ENCODE measurements at regions of chr5 and their contacts with region 1.

Region 1: GRCh38 chr5:179504600-179505396 is 45.6 kb upstream of the RUFY1 start:
- DNase-seq: no peak
- H3K4me3 ChIP-seq: no peak overlapping the region
- H3K4me3 Mint-ChIP-seq: no peak overlapping the region
- H3K27ac ChIP-seq: no peak overlapping the region
- H3K27ac Mint-ChIP-seq: peak overlapping the region in 1 of 7 donors; percentile 28
- H3K4me1 ChIP-seq: peaks cover 14 to 21% of the 10 kb centered on the region in 2 donors
- H3K4me1 Mint-ChIP-seq: peaks cover 21% of the 10 kb centered on the region
- H3K27me3 ChIP-seq: no peaks in the 10 kb centered on the region
- H3K27me3 Mint-ChIP-seq: peaks cover 0 to 4% (median 3%) of the 10 kb centered on the region in 3 donors
- CTCF ChIP-seq: no peak

Region 2: GRCh38 chr5:179410291-179411160 is 94.3 kb before region 1 on chr5:
- intact Hi-C with region 1: no loop called
- DNase-seq: peak in 1 of 3 donors; percentile 2
- H3K4me3 ChIP-seq: no peak overlapping the region
- H3K4me3 Mint-ChIP-seq: no peak overlapping the region
- H3K27ac ChIP-seq: no peak overlapping the region
- H3K27ac Mint-ChIP-seq: no peak overlapping the region
- H3K4me1 ChIP-seq: no peaks in the 10 kb centered on the region
- H3K4me1 Mint-ChIP-seq: no peaks in the 10 kb centered on the region
- H3K27me3 ChIP-seq: no peaks in the 10 kb centered on the region
- H3K27me3 Mint-ChIP-seq: peaks cover 4 to 5% (median 4%) of the 10 kb centered on the region in 3 donors
- CTCF ChIP-seq: no peak

Region 3: DNA sequence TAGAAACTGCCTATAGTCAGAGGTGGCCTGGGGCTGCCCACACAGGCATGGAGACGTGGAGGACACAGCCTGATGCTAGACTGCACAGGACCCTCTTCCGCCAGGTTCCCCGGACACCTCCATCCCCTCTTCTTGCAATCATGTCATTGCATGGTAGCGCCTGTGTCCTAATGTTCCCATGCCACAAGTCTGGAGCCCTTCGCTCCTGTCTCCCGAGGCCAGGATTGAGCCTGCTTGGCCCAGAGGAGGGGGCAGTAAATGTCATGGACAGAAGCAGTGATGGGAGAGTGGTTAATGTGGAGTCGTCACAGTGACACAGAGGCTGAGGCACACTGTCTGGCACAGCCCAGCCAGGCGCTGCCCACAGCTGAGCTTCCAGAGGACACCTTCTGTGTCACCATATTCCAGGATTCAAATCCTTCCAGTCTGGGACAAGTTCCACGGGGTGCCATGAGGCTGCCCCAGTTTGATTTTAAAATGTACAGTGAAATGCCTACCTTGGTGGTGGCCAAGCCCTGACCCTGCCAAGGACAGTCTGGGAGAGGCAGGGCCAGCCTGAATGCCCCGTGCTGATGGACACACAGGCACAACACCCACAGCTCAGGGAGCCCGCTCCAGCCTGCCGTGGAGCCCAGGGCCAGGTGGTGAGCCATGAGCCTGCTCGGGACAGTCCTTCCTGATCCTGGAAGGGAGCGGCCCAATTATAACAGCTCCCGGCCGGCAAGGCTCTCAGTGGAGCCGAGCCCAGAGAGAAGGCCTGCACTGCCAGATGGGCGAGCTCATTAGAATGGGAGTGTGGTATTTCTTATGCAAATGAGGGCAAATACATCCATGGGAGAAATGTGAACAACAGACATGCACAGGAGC is 53.6 kb before region 1 on chr5:
- intact Hi-C with region 1: loop called in 1 of 2 experiments (anchors 5 kb)
- DNase-seq: peak in 1 of 3 donors; percentile 1
- H3K4me3 ChIP-seq: no peak overlapping the region
- H3K4me3 Mint-ChIP-seq: no peak overlapping the region
- H3K27ac ChIP-seq: no peak overlapping the region
- H3K27ac Mint-ChIP-seq: peak overlapping the region in 1 of 7 donors; percentile 28
- H3K4me1 ChIP-seq: no peaks in the 10 kb centered on the region
- H3K4me1 Mint-ChIP-seq: no peaks in the 10 kb centered on the region
- H3K27me3 ChIP-seq: no peaks in the 10 kb centered on the region
- H3K27me3 Mint-ChIP-seq: peaks cover 4 to 8% (median 8%) of the 10 kb centered on the region in 3 donors
- CTCF ChIP-seq: no peak

Region 4: DNA sequence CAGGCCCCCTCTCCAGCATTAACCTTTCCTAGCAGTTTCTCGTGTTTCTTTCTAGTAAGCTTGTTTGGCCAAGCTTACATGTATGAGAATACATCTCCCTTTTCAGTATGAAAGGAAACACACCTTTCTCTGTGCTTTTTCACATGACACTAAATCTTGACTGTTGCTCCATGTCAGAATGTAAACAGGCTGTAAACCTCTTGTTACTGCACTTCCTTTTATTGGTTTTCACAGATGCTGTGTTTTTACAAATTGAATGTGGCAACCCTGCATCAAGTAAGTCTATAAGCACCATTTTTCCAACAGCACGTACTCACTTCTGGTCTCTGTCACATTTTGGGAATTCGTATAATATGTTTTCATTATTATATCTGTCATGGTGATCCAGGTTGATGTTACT is 191.8 kb after region 1 on chr5:
- intact Hi-C with region 1: no loop called
- DNase-seq: peak in 1 of 3 donors; percentile 23
- H3K4me3 ChIP-seq: no peak overlapping the region
- H3K4me3 Mint-ChIP-seq: no peak overlapping the region
- H3K27ac ChIP-seq: peak overlapping the region in 1 of 2 donors; percentile 99
- H3K27ac Mint-ChIP-seq: peak overlapping the region; percentile 9 to 100 (median 69)
- H3K4me1 ChIP-seq: peaks cover 46 to 64% of the 10 kb centered on the region in 2 donors
- H3K4me1 Mint-ChIP-seq: peaks cover 44% of the 10 kb centered on the region
- H3K27me3 ChIP-seq: no peaks in the 10 kb centered on the region
- H3K27me3 Mint-ChIP-seq: peaks cover 1 to 2% (median 2%) of the 10 kb centered on the region in 3 donors
- CTCF ChIP-seq: no peak